ENCODE measurements at regions of chr1 and their contacts with region 1.

Region 1: DNA sequence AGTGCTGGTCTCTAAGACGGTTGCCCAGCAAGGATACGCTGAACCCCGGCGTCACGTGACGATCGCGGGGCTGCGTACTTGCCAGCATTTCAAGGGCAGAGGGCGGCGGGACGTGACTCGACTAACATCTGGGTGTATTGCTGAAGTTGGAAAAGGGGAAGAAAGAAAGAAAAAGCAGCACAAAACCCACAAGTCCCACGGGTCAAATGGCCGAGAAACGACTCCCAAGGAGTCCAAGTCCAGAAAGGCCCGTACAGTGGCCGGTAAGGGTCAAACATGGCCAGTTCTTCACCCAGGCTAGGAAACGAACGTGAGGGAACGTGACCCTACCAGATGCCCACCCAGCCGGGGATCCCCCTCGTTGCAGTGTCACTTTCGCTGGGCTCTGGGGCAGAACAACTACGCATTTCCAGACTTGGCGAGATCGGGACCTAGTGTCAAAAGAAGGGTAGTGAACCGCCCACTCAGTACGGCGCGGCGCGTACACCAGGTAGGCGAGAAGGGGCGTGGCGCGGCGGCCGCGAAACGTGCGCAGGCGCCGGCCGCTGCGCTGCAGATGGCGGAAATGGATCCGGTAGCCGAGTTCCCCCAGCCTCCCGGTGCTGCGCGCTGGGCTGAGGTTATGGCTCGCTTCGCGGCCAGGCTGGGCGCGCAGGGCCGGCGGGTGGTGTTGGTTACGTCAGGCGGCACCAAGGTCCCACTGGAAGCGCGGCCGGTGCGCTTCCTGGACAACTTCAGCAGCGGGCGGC is at the starts of genes PPCS and ZMYND12:
- DNase-seq: peak; percentile 73 to 90
- H3K4me3 ChIP-seq: peak within 1 kb of the TSS; percentile 91
- H3K27ac ChIP-seq: peak within 1 kb of the TSS; percentile 70
- H3K4me1 ChIP-seq: peaks cover 26% of the 10 kb centered on the region
- H3K27me3 ChIP-seq: no peaks in the 10 kb centered on the region
- CTCF ChIP-seq: no peak
- total RNA-seq, gene PPCS: 73.0 and 76.0 TPM in 2 replicates
- total RNA-seq, gene ZMYND12: 1.7 and 3.7 TPM in 2 replicates

Region 2: DNA sequence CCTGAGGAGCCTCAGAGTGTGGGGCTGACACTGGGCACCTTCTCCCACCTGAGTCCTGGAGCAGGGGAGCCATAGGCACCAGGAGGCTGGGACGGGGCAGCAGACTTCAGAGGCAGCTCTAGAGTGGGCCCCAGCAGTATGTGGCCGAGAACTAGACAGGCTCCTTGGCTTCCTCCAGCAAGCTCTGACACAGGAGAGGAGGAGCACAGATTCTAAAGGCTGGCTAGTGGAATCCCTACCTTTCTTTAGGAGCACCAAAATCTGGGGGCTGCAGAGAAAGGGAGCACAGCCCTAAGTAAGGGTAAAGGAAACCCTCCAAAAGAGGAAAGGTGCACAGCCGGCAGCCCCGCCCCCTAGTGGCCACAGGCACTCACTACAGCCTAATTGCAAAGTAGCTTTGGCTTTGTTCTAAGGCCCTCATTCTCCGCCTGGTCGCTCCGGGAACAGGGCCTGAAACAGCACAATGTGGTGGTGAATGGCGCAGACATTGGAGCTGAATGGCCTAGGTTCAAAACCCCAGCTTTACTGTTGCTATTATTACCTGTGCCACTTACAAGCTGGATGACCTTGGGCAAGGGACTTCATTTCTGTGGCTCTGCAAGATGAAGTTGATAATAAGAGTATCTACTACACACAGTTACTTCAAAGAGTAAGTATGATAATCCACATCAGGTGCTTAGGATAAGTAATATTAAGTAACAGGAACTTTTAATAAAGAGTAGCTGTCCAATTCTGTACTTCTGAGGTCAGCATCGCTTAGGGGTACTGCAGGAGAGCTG is 282.8 kb before region 1 on chr1:
- CTCF ChIA-PET with region 1: no interaction called
- POLR2A ChIA-PET with region 1: no interaction called
- intact Hi-C with region 1: loop called (anchors 10 kb)
- DNase-seq: peak in 1 of 2 experiments; percentile 65
- H3K4me3 ChIP-seq: no peak overlapping the region
- H3K27ac ChIP-seq: 0 out of 2 replicates have a peak overlapping the region, but pooled peaks have one; percentile 1
- H3K4me1 ChIP-seq: peaks cover 47% of the 10 kb centered on the region
- H3K27me3 ChIP-seq: no peaks in the 10 kb centered on the region
- CTCF ChIP-seq: peak; percentile 98

Region 3: DNA sequence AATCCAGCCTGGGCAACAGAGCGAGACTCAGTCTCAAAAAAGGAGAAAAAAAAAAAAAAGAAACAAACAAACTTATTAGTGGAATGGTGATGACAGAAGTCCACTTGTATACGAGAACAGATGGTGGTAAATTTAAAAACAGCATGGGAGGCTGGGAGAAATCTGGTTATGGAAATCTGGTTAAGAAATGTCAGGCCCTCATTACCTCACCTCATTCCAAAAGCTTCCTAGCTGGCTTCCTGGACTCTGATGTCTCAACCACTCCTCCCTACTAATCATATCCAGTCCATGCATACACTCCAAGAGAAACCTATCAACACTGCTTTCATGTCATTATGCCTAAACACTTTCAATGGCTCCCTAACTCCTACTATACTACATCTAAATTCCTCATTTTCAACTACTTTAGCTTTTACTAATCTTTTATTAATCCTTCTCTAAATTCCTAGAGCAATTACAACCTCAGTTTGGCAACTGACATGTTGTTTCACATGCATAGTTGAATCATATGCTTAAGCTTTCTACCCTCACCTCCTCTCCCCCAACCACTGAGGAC is 174.1 kb before region 1 on chr1:
- CTCF ChIA-PET with region 1: no interaction called
- POLR2A ChIA-PET with region 1: no interaction called
- intact Hi-C with region 1: loop called (anchors 5 kb)
- DNase-seq: peak in 1 of 2 experiments; percentile 42
- H3K4me3 ChIP-seq: peak overlapping the region; percentile 4; the same call in 1 of the 2 replicates
- H3K27ac ChIP-seq: peak overlapping the region; percentile 86
- H3K4me1 ChIP-seq: peaks cover 48% of the 10 kb centered on the region
- H3K27me3 ChIP-seq: no peaks in the 10 kb centered on the region
- CTCF ChIP-seq: no peak

Region 4: DNA sequence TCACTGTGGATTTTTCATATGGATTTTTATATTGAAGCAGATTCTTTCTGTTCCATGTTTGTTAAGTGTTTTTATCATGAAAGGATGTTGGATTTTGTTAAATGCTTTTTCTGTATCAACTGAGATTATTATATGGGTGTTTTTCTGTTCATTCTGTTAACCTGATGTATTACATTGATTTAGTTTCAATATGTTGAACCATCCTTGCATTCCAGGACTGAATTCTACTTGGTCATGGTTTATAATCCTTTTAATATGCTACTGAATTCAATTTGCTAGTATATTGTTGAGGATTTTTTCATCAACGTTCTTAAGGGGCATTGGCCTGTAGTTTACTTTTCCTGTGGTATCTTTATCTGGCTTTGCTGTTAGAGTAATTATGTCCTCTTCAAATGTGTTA is 62.7 kb after region 1 on chr1:
- CTCF ChIA-PET with region 1: no interaction called
- POLR2A ChIA-PET with region 1: no interaction called
- intact Hi-C with region 1: no loop called
- DNase-seq: no peak
- H3K4me3 ChIP-seq: no peak overlapping the region
- H3K27ac ChIP-seq: no peak overlapping the region
- H3K4me1 ChIP-seq: no peaks in the 10 kb centered on the region
- H3K27me3 ChIP-seq: no peaks in the 10 kb centered on the region
- CTCF ChIP-seq: no peak

Region 5: DNA sequence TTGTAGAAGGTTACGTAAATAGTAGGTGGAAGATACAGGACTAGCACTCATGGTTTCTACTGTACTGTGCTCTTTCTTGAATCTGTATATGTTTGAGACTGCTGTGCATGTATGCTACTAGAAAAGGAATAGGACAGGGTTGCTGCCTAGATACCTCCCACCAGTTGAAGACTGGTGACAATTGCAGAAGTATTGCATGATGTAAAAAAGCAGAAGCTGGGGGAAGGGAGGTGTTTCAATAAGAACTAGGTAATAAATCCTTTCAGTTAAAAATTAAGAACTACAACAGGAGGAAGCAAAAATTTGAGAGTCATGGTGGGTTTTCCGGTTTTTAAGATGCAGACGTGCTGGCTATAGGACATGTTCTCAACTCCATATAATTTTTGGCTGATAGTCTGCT is 95.0 kb after region 1 on chr1:
- CTCF ChIA-PET with region 1: no interaction called
- POLR2A ChIA-PET with region 1: no interaction called
- intact Hi-C with region 1: no loop called
- DNase-seq: no peak
- H3K4me3 ChIP-seq: no peak overlapping the region
- H3K27ac ChIP-seq: no peak overlapping the region
- H3K4me1 ChIP-seq: no peaks in the 10 kb centered on the region
- H3K27me3 ChIP-seq: no peaks in the 10 kb centered on the region
- CTCF ChIP-seq: no peak

Measured in PC-9 (cell line).